Mucosa of descending colon (tissue), 3 donors: ENCODE measurements at regions of chr9 and their contacts with region 1.

Region 1: GRCh38 chr9:83334320-83334719 is 203.9 kb downstream of the FRMD3 start:
- DNase-seq: peak; percentile 72 to 89 (median 88)
- ATAC-seq: peak; percentile 97
- H3K4me3 ChIP-seq: no peak overlapping the region
- H3K4me1 ChIP-seq: no peaks in the 10 kb centered on the region
- CTCF ChIP-seq: peak; percentile 63

Region 2: DNA sequence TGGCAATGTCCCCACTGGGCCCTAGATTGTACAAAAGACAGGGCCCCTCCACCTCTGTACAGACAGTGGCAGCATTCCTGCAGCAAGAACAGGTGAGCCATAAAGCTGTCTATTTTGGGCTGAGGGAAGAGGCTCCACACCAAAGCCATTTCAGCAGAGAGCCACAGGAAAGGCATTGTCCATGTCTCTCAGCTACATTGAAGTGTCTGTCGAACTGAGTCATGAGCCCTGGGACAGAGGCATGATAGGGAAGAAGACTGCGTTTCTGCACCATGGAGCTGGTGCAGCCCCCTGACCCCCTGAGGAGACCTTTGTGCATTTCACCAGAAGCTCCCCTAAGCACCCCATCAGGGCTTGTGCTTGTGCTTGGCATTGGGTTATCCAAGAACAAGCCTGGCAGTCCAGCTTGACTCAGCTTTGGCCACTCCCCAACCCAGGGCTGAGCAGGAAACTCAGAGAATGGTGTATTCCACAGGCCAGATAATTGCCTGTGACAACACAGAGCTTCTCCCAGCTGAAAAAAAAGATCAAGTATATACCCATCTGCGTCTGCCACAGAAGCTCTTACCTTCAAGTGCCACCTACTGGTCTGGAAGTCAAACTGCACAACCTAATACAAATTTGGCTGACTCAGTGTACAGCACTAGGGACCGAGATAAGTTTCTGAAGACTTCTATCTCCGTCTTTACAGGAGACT is 209.8 kb after region 1 on chr9:
- intact Hi-C with region 1: loop called (anchors 5 to 10 kb)
- DNase-seq: peak in 2 of 3 donors; percentile 44 to 49
- ATAC-seq: peak; percentile 99
- H3K4me3 ChIP-seq: no peak overlapping the region
- H3K4me1 ChIP-seq: peaks cover under 1% of the 10 kb centered on the region
- CTCF ChIP-seq: peak; percentile 48